ENCODE measurements at regions of chr7 and their contacts with region 1.

Region 1: GRCh38 chr7:80218723-80219122 is 84.1 kb downstream of the GNAI1 start:
- DNase-seq: peak; percentile 30
- ATAC-seq: peak; percentile 82
- H3K4me3 Mint-ChIP-seq: no peak overlapping the region
- H3K27ac Mint-ChIP-seq: no peak overlapping the region
- H3K4me1 Mint-ChIP-seq: peaks cover 14% of the 10 kb centered on the region
- H3K27me3 Mint-ChIP-seq: peaks cover 2% of the 10 kb centered on the region

Region 2: DNA sequence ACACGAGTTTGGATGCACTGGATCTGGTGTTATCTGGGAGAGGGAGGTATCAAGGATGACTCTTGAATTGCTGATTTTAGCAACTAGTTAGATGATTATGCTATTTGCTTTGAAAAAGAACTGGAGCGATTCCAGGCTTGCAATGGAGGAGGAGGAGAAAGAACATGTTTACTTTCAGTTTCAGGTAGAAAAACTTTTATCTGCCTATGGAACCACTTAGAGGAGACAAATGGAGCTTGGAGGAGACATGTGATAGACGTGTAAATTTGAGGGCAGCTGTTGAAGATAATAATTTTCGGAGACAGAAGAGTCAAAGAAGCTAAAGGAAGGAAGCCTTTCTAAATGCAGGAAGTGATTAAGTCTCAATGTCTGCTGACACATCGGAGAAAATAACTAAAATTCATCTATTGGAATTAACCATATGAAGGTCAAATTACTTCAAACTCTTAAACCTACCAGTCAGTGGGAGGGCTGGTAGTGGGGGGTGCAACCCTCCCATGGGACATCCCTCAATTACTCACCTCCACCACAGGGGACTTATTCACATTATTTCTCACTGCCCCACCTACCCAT is 140.5 kb before region 1 on chr7:
- CTCF ChIA-PET with region 1: no interaction called
- POLR2A ChIA-PET with region 1: no interaction called
- intact Hi-C with region 1: loop called in 1 of 2 experiments (anchors 1 kb)
- DNase-seq: peak; percentile 44
- ATAC-seq: peak; percentile 79
- H3K4me3 Mint-ChIP-seq: peak overlapping the region; percentile 34
- H3K27ac Mint-ChIP-seq: peak overlapping the region; percentile 74
- H3K4me1 Mint-ChIP-seq: peaks cover 12% of the 10 kb centered on the region
- H3K27me3 Mint-ChIP-seq: no peaks in the 10 kb centered on the region

Region 3: GRCh38 chr7:80151274-80151665 is 67.5 kb before region 1 on chr7:
- CTCF ChIA-PET with region 1: no interaction called
- POLR2A ChIA-PET with region 1: interaction called, 3 read pairs
- intact Hi-C with region 1: loop called (anchors 1 to 2 kb)
- DNase-seq: peak; percentile 61
- ATAC-seq: peak; percentile 96
- H3K4me3 Mint-ChIP-seq: no peak overlapping the region
- H3K27ac Mint-ChIP-seq: no peak overlapping the region
- H3K4me1 Mint-ChIP-seq: peaks cover 25% of the 10 kb centered on the region
- H3K27me3 Mint-ChIP-seq: peaks cover 19% of the 10 kb centered on the region

Region 4: DNA sequence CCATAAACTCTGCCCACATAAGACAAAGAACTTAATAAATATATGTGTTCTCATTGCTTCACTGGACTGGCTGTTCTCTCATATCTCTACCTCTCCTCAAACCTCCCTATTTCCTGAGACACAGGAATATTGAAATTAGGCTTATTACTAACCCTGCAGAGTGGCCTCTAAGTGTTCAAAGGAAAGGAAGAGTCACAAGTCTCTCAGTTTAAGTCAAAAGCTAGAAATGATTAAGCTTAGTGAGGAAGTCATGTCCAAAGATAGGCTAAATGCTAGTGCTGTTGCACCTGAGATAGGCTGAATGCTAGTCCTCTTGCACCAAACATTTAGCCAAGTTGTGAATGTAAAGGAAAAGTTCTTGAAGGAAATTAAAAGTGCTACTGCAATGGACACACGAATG is 43.0 kb before region 1 on chr7:
- CTCF ChIA-PET with region 1: no interaction called
- POLR2A ChIA-PET with region 1: no interaction called
- intact Hi-C with region 1: loop called (anchors 1 to 5 kb)
- DNase-seq: no peak
- ATAC-seq: peak; percentile 81
- H3K4me3 Mint-ChIP-seq: no peak overlapping the region
- H3K27ac Mint-ChIP-seq: no peak overlapping the region
- H3K4me1 Mint-ChIP-seq: peaks cover 44% of the 10 kb centered on the region
- H3K27me3 Mint-ChIP-seq: peaks cover 7% of the 10 kb centered on the region

Region 5: DNA sequence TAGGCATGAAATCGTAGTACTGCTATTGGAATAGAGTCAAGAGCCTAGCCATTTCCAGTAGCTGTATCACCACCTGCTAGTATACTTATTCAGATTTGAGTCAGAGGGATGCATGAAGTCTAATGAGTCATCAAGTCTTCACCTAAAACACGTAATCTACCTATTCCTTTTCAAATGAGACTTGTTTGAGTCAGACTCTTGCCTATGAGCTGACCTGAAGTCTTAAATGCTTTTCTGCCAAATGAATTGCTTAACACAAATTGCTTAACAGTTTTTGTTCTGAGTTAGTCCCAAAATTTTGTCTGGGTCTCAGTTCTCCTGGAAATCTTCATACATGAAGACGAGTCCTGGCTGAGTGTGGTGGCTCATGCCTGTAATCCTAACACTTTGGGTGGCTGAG is 128.0 kb after region 1 on chr7:
- CTCF ChIA-PET with region 1: no interaction called
- POLR2A ChIA-PET with region 1: no interaction called
- intact Hi-C with region 1: loop called in 1 of 2 experiments (anchors 1 kb)
- DNase-seq: no peak
- ATAC-seq: peak; percentile 97
- H3K4me3 Mint-ChIP-seq: no peak overlapping the region
- H3K27ac Mint-ChIP-seq: no peak overlapping the region
- H3K4me1 Mint-ChIP-seq: peaks cover 11% of the 10 kb centered on the region
- H3K27me3 Mint-ChIP-seq: no peaks in the 10 kb centered on the region

Measured in activated CD4-positive, alpha-beta T cell treated with anti-CD3 and anti-CD28 coated beads for 36 hours (primary cell).